Naive thymus-derived CD8-positive, alpha-beta T cell (primary cell): ENCODE measurements at regions of chr22 and their contacts with region 1.

Region 1: DNA sequence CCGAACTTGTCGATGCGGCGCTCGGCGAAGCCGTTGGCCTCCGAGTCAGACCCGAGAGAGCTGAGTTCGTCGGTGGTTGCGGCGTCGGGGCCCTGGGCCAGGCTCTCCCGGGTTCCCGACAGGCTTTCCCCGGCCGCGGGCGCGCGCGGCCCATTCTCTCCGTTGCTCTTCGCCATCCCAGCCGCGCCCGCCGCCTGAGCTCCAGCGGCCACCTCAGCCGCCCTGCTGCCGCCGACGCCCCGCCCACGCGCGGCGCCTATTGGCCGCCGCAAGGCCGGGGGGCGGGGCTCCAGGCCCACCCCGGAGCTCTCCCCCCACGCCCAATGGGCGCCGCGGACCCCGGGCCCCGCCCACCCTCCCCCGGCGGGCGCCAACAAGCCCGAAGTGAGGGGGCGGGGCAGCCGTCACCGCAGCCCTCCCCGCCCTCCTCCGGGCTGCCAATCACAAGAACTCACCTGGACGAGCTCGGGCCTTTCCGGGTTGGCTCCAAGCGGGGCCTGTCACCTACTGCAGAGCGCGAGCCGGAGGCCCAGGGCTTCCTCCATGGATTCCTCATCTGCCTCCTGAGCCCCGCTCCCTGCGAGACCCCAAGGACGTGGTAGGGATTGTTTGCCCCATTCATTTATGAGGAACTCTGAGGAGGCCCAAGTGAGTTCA is at the start of gene TBC1D10A:
- DNase-seq: peak; percentile 85 to 98 (median 93)
- ATAC-seq: peak; percentile 87
- H3K4me3 Mint-ChIP-seq: peak within 1 kb of the TSS; percentile 89 to 98 (median 92)
- H3K27ac Mint-ChIP-seq: peak within 1 kb of the TSS; percentile 86 to 98 (median 94)
- H3K4me1 Mint-ChIP-seq: peaks cover 31 to 54% (median 48%) of the 10 kb centered on the region in 4 donors
- H3K27me3 Mint-ChIP-seq: no peaks in the 10 kb centered on the region
- polyA plus RNA-seq, gene TBC1D10A: 56.7 to 83.4 (median 62.0) TPM

Region 2: DNA sequence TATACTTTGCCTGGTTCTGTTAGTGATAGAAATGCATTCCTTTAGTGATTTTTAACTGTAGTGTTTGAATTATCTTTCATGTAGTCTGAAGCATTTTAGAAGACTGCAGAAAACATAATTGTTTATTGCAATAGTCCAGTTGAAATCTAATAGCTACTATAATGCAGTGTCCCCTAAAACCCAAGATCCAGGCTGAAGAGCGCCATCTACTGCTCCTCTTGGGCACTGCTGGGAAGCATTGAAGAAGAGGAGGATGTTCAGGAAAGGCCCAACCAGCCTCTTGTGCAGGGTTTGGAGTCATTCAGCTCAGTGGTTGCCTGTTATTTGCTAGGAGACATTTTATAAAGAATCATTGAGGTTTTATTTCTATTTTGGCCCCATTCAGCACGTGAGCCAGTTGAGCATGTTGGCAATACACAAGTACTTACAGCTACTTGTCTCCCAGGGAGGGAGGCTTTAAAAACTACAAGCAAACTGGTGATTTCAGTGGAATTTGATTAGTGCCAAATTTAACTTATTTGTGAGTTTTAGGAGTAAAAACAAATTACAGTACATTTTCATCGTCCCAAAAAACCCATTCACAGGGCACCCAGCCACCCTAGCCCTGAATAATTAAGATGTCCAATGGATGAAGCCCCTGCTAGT is 321.5 kb before region 1 on chr22:
- POLR2A ChIA-PET with region 1: no interaction called
- DNase-seq: peak; percentile 35 to 74 (median 58)
- ATAC-seq: peak; percentile 57 to 60
- H3K4me3 Mint-ChIP-seq: no peak overlapping the region
- H3K27ac Mint-ChIP-seq: peak overlapping the region in 1 of 10 donors; percentile 62
- H3K4me1 Mint-ChIP-seq: peaks cover 0 to 18% (median 7%) of the 10 kb centered on the region in 4 donors
- H3K27me3 Mint-ChIP-seq: no peaks in the 10 kb centered on the region

Region 3: DNA sequence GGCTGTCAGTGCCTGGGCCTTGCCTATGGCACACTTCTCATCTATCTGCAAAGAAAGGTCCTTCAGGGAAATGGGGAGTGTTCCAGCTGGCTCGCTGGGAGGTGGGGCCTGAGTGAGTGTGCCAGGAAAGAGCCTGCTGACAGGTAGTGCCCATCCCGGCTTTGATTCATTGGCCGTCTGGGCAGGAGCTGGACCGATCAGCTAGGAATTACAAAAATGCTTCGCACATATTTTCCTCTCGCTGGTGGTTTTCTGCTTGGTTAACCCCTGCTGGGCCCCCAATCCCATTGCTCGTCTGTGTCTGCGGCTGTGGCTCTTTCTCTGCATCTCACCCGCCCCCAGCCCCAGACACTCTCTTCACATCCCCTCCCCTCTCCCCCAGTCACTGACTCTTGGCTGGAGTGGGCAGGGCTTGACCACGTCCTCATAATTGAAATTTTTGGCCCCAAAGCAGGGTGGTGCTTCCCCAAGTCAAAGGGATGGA is 91.1 kb before region 1 on chr22:
- POLR2A ChIA-PET with region 1: no interaction called
- DNase-seq: no peak
- ATAC-seq: no peak
- H3K4me3 Mint-ChIP-seq: no peak overlapping the region
- H3K27ac Mint-ChIP-seq: peak overlapping the region in 2 of 10 donors; percentile 24 to 29
- H3K4me1 Mint-ChIP-seq: peaks cover 0 to 3% (median 1%) of the 10 kb centered on the region in 4 donors
- H3K27me3 Mint-ChIP-seq: no peaks in the 10 kb centered on the region

Region 4: GRCh38 chr22:30305519-30305905 is 21.3 kb before region 1 on chr22:
- POLR2A ChIA-PET with region 1: interaction called, 424 read pairs
- DNase-seq: peak in 9 of 10 donors; percentile 37 to 73 (median 55)
- ATAC-seq: peak; percentile 43 to 55
- H3K4me3 Mint-ChIP-seq: peak overlapping the region; percentile 63 to 85 (median 74)
- H3K27ac Mint-ChIP-seq: peak overlapping the region; percentile 94 to 100 (median 98)
- H3K4me1 Mint-ChIP-seq: peaks cover 68 to 99% (median 99%) of the 10 kb centered on the region in 4 donors
- H3K27me3 Mint-ChIP-seq: no peaks in the 10 kb centered on the region

Region 5: DNA sequence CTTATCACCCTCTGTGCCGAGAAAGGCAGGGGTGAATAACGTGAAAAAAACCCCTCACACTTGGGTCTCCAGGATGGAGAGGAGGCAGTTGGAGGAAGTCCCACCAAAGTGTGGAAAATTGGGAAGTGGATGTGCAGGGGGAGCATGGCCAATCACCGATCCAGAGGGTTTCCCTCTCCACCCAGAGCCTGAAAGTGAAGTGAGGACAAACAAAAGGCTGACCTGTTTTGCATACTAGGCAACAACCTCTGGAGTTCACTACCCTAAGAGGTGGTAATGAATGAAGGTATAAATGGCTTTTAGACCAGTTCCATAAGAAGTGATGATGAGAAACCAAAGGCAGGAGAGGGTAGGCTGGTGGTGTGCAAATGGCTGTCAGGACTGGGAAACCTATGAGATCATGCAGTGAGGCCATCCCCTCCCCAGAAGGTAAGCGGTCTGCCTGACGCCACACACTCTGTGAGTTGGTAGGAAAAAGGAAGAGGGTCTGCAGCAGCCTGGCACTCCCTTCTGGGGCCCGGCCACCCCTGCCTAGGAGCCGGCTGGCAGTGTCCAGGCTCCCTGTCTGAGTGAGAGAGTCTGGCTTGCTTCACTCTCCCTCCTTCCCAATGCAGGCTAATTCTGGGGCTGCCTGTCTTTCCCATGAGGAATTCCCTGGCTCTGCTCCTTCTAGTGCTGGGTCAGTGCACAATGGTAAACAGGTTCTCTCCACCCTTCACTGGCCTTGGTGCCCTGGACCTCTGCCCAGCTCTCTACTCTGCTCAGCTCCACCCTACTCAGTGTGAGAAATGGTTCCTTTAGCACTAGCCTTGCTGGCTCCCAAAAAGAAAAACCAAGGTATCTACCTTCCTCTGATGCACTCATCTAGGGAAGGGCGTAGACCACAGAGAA is 15.7 kb before region 1 on chr22:
- POLR2A ChIA-PET with region 1: interaction called, 424 read pairs
- DNase-seq: no peak
- ATAC-seq: no peak
- H3K4me3 Mint-ChIP-seq: peak overlapping the region; percentile 47 to 86 (median 76)
- H3K27ac Mint-ChIP-seq: peak overlapping the region; percentile 94 to 100 (median 98)
- H3K4me1 Mint-ChIP-seq: peaks cover 67 to 97% (median 96%) of the 10 kb centered on the region in 4 donors
- H3K27me3 Mint-ChIP-seq: no peaks in the 10 kb centered on the region

Region 6: GRCh38 chr22:30340911-30341685 is 14.3 kb after region 1 on chr22:
- POLR2A ChIA-PET with region 1: interaction called, 10 read pairs
- DNase-seq: no peak
- ATAC-seq: no peak
- H3K4me3 Mint-ChIP-seq: no peak overlapping the region
- H3K27ac Mint-ChIP-seq: peak overlapping the region in 3 of 10 donors; percentile 36 to 91 (median 80)
- H3K4me1 Mint-ChIP-seq: peaks cover 0 to 10% (median 3%) of the 10 kb centered on the region in 4 donors
- H3K27me3 Mint-ChIP-seq: no peaks in the 10 kb centered on the region

Region 7: DNA sequence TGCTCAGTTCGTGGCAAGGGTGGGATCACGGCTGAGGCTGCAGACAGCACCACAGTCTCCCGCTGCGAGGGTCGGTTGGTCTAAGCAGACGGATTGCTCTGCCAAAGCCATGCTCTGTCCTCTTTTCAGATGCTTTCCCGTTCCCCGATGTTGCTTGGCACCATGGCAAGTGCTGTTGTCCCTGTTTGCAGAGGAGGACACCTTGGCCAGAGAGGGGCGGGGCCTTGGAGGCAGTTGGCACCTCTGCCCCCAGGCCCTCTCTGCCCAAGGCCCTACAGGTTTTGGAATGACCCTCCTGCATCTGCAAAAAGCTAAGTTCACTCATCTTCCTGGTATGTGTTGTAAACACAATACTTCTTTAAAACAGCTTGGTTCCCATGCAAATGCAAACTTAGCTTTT is 41.6 kb after region 1 on chr22:
- POLR2A ChIA-PET with region 1: no interaction called
- DNase-seq: no peak
- ATAC-seq: no peak
- H3K4me3 Mint-ChIP-seq: no peak overlapping the region
- H3K27ac Mint-ChIP-seq: no peak overlapping the region
- H3K4me1 Mint-ChIP-seq: peaks cover 0 to 10% (median 0%) of the 10 kb centered on the region in 4 donors
- H3K27me3 Mint-ChIP-seq: no peaks in the 10 kb centered on the region

Region 8: DNA sequence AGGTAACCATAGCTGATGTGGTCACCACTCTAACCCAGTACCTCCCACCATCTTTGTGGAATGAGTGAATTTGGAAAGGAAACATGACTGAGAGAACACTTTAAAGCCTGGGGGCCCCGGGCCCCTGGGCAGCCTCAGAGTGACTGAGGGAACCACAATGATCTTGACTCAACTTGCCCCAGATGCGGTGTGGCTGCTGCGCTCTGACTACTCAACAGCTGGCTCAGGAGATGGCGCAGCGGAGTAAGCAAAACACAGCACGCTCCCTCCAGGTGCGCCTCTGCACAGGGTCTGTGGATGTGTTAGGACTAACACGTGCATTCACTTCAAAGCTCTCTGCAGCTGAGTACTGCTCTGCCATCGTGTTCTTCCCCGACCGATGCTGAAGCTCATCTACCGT is 54.4 kb after region 1 on chr22:
- POLR2A ChIA-PET with region 1: no interaction called
- DNase-seq: no peak
- ATAC-seq: no peak
- H3K4me3 Mint-ChIP-seq: no peak overlapping the region
- H3K27ac Mint-ChIP-seq: no peak overlapping the region
- H3K4me1 Mint-ChIP-seq: peaks cover 3 to 5% (median 3%) of the 10 kb centered on the region in 4 donors
- H3K27me3 Mint-ChIP-seq: no peaks in the 10 kb centered on the region